ENCODE measurements at regions of chr4 and their contacts with region 1.

Region 1: GRCh38 chr4:3346146-3346545 is 53.3 kb downstream of the RGS12 start:
- DNase-seq: no peak
- ATAC-seq: peak; percentile 75
- H3K4me3 Mint-ChIP-seq: no peak overlapping the region
- H3K27ac Mint-ChIP-seq: peak overlapping the region; percentile 72; the same call in 1 of the 2 replicates
- H3K4me1 Mint-ChIP-seq: peaks cover 32% of the 10 kb centered on the region
- H3K27me3 Mint-ChIP-seq: no peaks in the 10 kb centered on the region
- CTCF ChIP-seq: peak; percentile 73

Region 2: DNA sequence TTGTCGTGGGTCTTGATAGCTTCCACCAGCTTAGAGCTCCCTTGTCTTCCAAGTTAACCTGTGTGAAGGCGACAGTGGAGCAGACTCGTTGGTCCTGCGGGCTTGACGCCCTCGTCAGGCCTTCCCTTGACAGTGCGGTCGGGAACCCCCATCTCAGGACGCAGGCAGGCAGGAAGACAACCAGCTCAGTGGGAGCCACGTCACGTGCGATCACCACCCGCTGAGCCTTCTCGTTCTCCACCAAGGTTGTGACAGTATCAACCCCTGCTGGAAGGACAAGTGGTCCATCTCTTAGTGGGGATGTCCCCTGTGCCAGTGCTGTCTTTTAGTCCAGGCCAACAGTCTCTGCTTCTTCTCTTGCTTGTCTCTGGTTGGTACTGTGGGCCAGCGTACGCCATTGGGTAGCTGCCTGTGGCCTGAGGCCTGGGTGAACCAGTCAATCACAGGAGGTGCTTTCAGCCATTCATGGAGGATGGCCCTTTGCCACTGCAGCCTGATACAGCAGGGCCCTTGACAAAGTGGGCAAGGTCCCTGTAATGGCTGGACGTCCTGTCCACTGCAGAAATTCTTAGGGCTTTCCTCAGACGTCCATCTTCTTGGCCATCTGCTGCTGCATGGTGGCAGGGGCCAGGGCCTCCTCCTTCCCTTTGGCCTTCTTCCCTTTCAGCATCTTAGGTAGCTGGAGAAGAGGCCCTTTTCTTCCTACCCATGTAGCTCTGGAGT is 21.9 kb before region 1 on chr4:
- CTCF ChIA-PET with region 1: interaction called, 14 read pairs
- POLR2A ChIA-PET with region 1: no interaction called
- DNase-seq: peak; percentile 78
- ATAC-seq: peak; percentile 93
- H3K4me3 Mint-ChIP-seq: no peak overlapping the region
- H3K27ac Mint-ChIP-seq: no peak overlapping the region
- H3K4me1 Mint-ChIP-seq: peaks cover 16% of the 10 kb centered on the region
- H3K27me3 Mint-ChIP-seq: no peaks in the 10 kb centered on the region
- CTCF ChIP-seq: no peak

Region 3: GRCh38 chr4:3332498-3332897 is 13.6 kb before region 1 on chr4:
- CTCF ChIA-PET with region 1: interaction called, 10 read pairs
- POLR2A ChIA-PET with region 1: no interaction called
- DNase-seq: no peak
- ATAC-seq: no peak
- H3K4me3 Mint-ChIP-seq: no peak overlapping the region
- H3K27ac Mint-ChIP-seq: peak overlapping the region; percentile 93; the same call in 1 of the 2 replicates
- H3K4me1 Mint-ChIP-seq: no peaks in the 10 kb centered on the region
- H3K27me3 Mint-ChIP-seq: no peaks in the 10 kb centered on the region
- CTCF ChIP-seq: no peak

Region 4: DNA sequence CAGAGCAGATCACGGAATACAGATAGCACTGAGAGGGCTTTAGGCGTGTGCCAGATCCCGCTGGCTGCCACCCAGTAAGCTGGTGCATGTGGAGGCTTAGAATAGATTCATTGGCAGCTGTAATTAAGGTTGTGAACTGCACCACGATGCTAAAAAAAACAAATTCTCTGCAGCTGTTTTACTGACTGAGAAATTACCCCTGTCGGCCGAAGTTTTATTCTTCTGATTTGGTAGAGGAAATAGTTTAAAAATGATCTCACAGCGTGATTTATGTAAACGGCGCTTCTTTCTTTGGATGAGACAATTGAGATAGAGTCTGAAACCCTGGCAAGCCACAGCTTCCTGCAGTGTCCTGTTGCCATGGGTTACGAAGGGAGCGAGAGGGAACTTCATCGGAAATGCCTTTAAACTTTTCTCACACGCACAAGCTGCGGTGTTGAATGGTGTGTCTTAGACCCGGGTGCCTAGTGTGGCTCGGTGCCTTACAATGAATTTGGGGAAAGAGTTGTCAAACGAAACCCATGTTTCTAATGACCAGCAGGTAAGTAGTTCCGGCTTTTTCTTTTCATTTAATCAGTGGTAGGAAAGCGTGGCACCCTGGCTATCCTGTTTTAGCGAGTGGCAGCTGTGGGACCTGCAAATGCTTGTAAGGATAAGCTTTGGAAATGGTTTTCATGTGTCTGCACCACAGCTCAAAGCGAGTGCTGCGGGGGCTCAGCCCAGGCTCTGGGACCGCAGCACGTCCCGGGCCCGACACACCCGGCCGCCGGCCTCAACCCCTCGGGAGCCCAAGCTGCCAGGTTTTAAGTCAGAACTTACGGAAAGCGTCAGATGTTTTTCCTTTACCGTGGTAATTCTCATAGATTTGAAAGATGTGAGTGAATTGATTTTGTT is 23.9 kb after region 1 on chr4:
- CTCF ChIA-PET with region 1: interaction called, 22 read pairs
- POLR2A ChIA-PET with region 1: no interaction called
- DNase-seq: no peak
- ATAC-seq: peak; percentile 60
- H3K4me3 Mint-ChIP-seq: peak overlapping the region; percentile 54
- H3K27ac Mint-ChIP-seq: peak overlapping the region; percentile 39
- H3K4me1 Mint-ChIP-seq: peaks cover 44% of the 10 kb centered on the region
- H3K27me3 Mint-ChIP-seq: peaks cover 25% of the 10 kb centered on the region
- CTCF ChIP-seq: no peak

Region 5: GRCh38 chr4:3388471-3389232 is 42.5 kb after region 1 on chr4:
- CTCF ChIA-PET with region 1: interaction called, 13 read pairs
- POLR2A ChIA-PET with region 1: no interaction called
- DNase-seq: no peak
- ATAC-seq: peak; percentile 21
- H3K4me3 Mint-ChIP-seq: peak overlapping the region; percentile 39
- H3K27ac Mint-ChIP-seq: peak overlapping the region; percentile 11; the same call in 1 of the 2 replicates
- H3K4me1 Mint-ChIP-seq: peaks cover 65% of the 10 kb centered on the region
- H3K27me3 Mint-ChIP-seq: no peaks in the 10 kb centered on the region; the same call in 1 of the 2 replicates
- CTCF ChIP-seq: no peak

Region 6: GRCh38 chr4:3436798-3437581 is 90.8 kb after region 1 on chr4:
- CTCF ChIA-PET with region 1: interaction called, 51 read pairs
- POLR2A ChIA-PET with region 1: no interaction called
- DNase-seq: no peak
- ATAC-seq: no peak
- H3K4me3 Mint-ChIP-seq: no peak overlapping the region
- H3K27ac Mint-ChIP-seq: no peak overlapping the region
- H3K4me1 Mint-ChIP-seq: no peaks in the 10 kb centered on the region
- H3K27me3 Mint-ChIP-seq: no peaks in the 10 kb centered on the region
- CTCF ChIP-seq: no peak

Region 7: DNA sequence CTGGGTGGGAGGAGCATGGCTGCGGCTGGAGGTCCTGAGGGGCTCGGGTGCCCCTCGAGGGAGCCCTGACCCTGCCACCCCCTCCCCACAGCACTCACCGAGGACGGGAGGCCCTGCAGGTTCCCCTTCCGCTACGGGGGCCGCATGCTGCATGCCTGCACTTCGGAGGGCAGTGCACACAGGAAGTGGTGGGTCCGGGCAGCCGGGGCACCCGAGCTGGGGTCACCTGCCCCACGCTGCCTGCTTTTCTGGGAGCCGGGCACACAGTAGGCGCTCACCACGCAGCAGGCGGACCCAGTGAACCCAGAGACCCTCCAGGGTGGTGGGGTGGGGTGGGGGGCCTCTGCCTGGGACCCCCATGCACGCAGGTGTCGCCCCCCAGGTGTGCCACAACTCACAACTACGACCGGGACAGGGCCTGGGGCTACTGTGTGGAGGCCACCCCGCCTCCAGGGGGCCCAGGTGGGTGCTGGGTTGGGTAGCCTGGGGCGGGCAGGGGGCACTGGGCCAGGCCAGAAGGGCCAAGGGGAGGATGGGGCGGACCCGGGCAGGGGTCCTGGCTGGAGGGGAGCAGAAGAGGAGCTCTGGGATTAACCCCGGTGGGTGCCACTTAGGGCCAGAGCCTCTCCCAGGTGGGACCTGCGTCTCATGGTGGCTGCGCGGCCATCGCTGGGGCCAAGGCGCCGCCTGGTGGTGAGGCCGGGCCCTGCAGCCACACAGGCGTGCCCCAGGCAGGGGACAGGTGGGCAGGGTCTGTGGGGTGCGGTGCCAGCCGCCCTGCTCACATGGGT is 97.0 kb after region 1 on chr4:
- CTCF ChIA-PET with region 1: interaction called, 31 read pairs
- POLR2A ChIA-PET with region 1: no interaction called
- DNase-seq: peak; percentile 77
- ATAC-seq: peak; percentile 82
- H3K4me3 Mint-ChIP-seq: no peak overlapping the region
- H3K27ac Mint-ChIP-seq: no peak overlapping the region
- H3K4me1 Mint-ChIP-seq: no peaks in the 10 kb centered on the region
- H3K27me3 Mint-ChIP-seq: no peaks in the 10 kb centered on the region
- CTCF ChIP-seq: peak; percentile 100

Measured in WTC11 (cell line).